ENCODE measurements at regions of chr17 and their contacts with region 1.

Region 1: DNA sequence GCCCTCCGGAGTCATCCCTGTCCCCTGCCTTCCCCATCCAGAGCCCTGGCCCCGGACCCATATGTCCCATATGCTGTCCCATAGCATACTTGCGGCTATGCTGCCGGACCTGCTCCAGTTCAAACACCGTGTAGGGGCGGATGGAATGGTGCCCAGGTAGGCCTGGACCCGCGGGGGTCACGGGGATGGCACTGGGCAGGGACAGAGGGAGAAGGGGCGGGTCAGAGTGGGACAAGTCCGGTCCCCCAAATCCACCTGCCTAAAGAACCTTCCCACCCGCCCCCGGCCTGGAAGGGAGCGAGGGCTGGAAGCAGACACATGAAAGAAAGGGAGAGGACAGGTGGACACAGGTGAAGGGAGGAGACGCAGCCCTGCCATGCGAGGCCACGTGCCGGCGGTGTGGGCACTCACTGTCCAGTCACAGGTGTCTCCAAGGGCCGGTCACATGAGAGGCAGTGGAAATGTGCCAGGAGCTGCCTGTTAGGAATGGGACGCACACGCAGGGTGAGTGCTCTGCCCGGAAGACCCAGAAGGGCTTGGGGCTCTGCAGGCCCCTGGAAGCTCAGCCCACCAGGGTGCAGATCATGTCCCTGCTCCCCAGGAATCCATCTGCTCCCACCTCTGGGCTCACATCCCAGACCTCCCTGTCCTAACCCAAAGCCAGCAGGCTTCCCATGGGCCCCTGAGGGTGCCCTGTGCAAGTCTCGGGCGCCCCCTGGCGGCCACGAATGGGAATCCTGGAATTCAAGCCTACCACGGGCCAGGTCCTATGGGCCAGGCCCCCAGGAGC is 14.0 kb downstream of the UBALD2 start:
- DNase-seq: peak; percentile 94

Region 2: DNA sequence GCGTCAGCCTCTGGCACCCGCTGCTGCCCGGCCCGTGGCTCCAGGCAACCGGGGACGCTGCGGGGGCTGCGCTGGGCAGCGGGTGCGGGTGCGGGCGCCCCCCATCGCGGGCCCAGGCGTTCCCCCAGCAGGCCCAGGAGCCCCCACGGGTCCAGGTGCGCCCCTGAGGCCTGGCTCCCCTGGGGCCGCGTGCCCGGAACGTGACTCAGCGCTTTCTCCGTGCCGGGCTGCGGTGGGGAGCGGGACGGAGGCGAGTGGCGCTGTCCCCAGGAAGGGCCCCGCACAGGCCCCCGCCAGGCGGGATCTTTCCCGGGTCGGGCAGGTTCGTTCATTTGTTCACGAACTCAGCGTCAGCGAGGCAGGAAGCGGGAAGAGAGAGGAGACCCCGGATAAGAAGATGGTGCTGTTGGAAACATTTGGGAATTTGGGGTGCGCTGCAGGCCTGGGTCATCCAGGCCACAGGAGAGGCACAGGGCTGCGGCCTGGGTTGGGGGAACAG is 157.2 kb before region 1 on chr17:
- CTCF ChIA-PET with region 1: interaction called, 26 read pairs
- POLR2A ChIA-PET with region 1: interaction called, 3 read pairs
- DNase-seq: no peak

Region 3: DNA sequence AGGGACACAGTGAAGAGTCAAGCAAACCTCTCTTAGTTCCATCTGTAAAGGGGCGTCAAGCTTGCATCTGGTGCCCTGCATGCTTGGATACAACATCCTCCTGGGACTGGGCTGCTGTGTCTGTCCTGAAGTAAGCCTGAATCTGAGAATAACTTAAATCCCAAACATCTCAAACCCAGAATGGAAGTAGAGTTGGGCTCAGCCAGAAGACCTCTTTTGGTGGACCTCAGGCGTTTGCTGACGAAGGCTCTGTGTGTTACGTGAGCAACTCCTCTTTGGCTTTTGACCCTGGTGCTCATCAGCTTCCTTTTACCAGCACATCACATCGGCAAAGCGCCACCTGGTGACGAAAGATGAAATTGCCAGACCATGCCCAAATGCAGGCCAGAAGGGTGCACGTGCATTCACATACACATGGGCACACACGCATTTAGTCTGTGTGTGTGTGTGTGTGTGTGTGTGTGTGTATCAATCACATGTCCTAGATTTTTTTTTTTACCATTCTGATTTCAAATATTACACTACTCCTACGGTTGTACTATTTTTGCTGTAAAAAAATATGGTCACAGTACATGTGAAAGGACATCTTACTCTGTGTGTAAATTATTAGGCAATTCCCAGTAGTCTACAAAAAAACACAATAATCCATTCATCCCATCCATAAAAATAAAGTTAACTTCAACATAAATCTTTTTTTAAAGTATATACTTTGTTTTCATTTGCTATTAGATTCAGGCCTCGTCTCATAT is 97.0 kb before region 1 on chr17:
- CTCF ChIA-PET with region 1: interaction called, 12 read pairs
- POLR2A ChIA-PET with region 1: no interaction called
- DNase-seq: peak; percentile 91

Region 4: DNA sequence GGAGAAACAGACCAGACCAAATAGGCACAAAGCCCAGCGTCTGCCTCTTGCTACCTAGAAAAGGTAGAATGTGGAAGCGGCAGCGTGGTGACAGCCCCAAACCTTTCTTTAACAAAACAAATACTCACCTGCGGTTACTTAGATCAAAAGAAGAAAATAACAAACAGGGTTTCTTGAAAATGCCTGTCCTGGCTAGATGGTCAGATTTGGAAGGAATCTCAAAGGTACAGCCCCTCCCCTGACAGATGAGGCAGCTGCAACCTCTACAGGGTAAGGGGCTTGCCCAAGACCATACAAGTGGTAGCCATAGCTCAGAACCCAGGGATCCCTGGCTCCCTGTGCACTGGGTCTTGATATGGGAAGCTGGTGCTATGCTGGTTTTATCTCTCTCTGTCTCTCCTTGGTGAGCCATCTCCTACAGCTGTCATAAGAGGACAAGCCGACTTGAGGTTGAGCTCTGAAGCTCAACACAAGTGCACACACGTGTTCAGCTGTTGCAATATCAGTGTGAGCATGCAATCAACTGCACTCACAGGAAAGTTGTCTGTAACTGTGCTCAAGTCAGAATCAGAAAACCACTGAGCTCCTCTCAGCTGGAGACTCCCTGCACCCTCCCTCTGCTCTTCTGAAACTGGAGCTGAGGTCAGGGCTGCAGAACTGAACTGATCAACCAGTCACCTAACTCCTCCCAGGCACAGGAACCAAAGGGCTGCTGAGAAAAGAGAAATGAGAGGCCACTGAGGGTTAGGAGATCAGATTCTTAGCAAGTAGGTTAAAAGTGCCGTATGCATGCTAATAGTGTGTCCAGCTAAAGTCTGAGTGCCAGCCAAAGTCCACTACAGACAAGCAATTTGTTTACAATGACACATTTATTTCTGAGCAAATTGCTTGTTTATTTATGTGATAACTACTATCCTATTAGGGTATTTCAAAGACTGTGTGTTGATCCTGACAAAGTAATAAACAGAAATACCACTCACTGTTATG is 32.8 kb before region 1 on chr17:
- CTCF ChIA-PET with region 1: interaction called, 15 read pairs
- POLR2A ChIA-PET with region 1: interaction called, 3 read pairs
- DNase-seq: peak; percentile 38

Region 5: DNA sequence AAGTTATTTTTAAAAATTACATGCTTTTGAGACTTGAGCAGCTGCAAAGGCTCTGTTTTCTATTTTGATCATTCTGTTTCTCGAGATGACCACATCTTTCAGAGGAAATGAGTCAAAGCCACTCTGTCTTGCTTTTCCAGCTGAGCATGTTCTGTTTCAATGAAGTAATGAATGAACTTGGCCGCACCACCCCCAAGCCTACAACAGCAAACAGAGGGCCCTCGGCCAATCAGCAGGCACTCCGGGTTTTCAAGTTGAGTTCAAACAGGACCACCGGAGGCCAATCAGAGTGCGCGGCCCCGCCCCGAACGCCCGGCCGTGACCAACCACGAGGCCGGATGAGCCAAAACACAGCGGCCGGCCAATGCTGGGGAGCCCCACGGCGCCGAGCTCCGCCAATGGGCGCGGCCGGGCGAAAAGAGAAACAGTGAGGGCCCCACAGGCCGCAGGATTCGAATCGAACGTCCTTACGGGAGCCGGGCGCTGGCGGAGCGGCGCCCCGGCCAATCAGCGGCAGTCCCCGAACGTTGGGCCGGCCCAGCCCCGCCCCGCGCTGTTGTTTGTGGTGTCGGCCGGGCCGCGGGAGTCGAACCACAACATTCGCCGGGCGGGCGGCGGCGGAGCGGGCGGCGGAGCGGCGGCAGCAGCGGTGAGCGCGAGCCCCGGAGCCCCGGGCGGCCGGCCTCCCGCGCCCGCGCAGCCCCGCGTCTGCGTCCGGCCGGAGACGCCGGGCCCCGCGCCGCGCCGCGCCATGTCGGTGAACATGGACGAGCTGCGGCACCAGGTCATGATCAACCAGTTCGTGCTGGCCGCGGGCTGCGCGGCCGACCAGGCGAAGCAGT is 14.2 kb before region 1 on chr17 and contains the start of gene UBALD2:
- CTCF ChIA-PET with region 1: interaction called, 29 read pairs
- POLR2A ChIA-PET with region 1: interaction called, 14 read pairs
- DNase-seq: peak; percentile 95

Region 6: GRCh38 chr17:76296186-76296585 is 17.0 kb after region 1 on chr17:
- CTCF ChIA-PET with region 1: interaction called, 13 read pairs
- POLR2A ChIA-PET with region 1: no interaction called
- DNase-seq: no peak

Region 7: GRCh38 chr17:76452660-76453430 is 173.7 kb after region 1 on chr17 and contains the start of gene UBE2O:
- CTCF ChIA-PET with region 1: no interaction called
- POLR2A ChIA-PET with region 1: no interaction called
- DNase-seq: peak; percentile 99

Measured in HEK293T (cell line).